Heart right ventricle (tissue), 16 donors: ENCODE measurements at regions of chr6 and their contacts with region 1.

Region 1: GRCh38 chr6:42166444-42167141 is 6.6 kb upstream of the GUCA1A start:
- DNase-seq: peak; percentile 27 to 63
- ATAC-seq: peak; percentile 45 to 80 (median 78)
- H3K4me3 ChIP-seq: no peak overlapping the region
- H3K27ac ChIP-seq: no peak overlapping the region
- H3K4me1 ChIP-seq: no peaks in the 10 kb centered on the region
- H3K27me3 ChIP-seq: no peaks in the 10 kb centered on the region
- CTCF ChIP-seq: peak; percentile 89 to 97 (median 94)

Region 2: DNA sequence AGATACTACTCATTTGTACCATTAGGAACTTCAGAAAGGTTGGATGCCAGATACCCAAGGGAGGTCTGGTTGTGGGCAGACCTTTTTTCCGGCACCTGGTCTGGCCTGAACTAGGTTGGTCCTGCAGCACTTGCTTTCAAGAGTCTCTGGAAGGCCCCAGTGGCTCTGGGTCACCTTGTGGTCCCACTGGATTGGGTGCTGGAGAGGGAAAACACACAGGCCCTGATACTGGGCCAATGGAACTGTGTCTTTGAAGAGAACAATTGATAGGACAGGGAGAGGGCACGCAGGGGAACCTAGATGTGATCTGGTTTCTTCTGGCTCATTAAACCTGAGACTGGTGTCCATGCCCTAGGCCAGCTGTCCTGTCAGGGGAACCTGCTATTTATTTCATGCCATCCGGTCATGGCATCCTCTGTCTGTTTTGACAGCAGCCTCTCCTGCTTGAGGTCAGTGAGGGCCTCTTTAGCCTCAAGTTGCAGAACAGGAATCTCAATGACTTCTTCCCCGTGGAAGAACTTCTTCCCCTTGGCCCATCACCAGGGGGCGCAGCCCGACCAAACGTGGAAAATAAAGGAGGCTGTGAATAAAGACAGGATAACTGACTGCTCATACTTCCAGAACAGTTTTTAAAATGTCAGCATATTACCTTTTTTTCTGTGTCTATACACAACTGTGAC is 91.3 kb before region 1 on chr6:
- intact Hi-C with region 1: loop called (anchors 1 to 2 kb)
- DNase-seq: peak; percentile 76 to 80
- ATAC-seq: peak; percentile 25 to 80 (median 70)
- H3K4me3 ChIP-seq: no peak overlapping the region
- H3K27ac ChIP-seq: peak overlapping the region in 8 of 10 donors; percentile 20 to 56 (median 36)
- H3K4me1 ChIP-seq: peaks cover 0 to 29% (median 14%) of the 10 kb centered on the region in 9 donors
- H3K27me3 ChIP-seq: no peaks in the 10 kb centered on the region
- CTCF ChIP-seq: peak; percentile 62 to 90 (median 85)

Region 3: GRCh38 chr6:42086046-42087035 is 80.3 kb before region 1 on chr6:
- intact Hi-C with region 1: loop called in 1 of 10 experiments (anchors 2 kb)
- DNase-seq: no peak
- ATAC-seq: peak; percentile 42 to 71 (median 58)
- H3K4me3 ChIP-seq: no peak overlapping the region
- H3K27ac ChIP-seq: peak overlapping the region; percentile 50 to 87 (median 78)
- H3K4me1 ChIP-seq: peaks cover 2 to 36% (median 19%) of the 10 kb centered on the region in 9 donors
- H3K27me3 ChIP-seq: no peaks in the 10 kb centered on the region
- CTCF ChIP-seq: peak in 6 of 9 donors; percentile 7 to 38 (median 24)